ENCODE measurements at regions of chr10 and their contacts with region 1.

Region 1: DNA sequence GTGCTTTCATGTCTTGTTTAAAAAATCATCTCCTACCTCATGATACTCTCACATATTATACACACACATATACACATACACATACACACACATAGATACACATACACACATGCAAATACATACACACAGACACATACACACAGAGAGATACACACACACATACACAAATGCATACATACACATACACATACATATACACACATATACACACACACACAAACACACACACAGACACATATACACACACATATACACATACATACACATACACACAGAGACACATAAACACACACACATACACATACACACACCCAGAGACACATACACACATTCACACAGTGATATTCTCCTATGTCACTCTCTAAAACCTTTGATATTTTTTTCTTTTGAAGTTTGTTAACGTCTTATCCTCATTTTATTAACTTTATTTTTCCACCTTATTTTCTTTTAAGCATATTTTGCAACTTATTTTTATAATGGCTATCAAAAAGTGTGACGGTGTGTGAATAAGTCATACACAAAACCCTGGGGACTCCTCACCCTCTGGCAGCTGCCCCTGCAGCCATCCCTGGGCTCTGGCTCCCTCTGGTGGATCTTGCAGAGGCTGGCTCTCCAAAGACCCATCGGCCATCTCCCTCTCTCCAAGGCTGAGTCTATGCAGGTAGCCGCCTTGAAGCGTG is 3.9 kb upstream of the C10orf120 start:
- DNase-seq: peak; percentile 46 to 86
- H3K4me3 ChIP-seq: no peak overlapping the region
- H3K27ac ChIP-seq: no peak overlapping the region
- H3K4me1 ChIP-seq: no peaks in the 10 kb centered on the region; a peak in 1 of 7 replicates
- H3K27me3 ChIP-seq: no peaks in the 10 kb centered on the region
- CTCF ChIP-seq: peak; percentile 92 to 97 (median 95)
- EP300 ChIP-seq: no peak
- POLR2A ChIP-seq: no peak
- RAD21 ChIP-seq: peak; percentile 99

Region 2: DNA sequence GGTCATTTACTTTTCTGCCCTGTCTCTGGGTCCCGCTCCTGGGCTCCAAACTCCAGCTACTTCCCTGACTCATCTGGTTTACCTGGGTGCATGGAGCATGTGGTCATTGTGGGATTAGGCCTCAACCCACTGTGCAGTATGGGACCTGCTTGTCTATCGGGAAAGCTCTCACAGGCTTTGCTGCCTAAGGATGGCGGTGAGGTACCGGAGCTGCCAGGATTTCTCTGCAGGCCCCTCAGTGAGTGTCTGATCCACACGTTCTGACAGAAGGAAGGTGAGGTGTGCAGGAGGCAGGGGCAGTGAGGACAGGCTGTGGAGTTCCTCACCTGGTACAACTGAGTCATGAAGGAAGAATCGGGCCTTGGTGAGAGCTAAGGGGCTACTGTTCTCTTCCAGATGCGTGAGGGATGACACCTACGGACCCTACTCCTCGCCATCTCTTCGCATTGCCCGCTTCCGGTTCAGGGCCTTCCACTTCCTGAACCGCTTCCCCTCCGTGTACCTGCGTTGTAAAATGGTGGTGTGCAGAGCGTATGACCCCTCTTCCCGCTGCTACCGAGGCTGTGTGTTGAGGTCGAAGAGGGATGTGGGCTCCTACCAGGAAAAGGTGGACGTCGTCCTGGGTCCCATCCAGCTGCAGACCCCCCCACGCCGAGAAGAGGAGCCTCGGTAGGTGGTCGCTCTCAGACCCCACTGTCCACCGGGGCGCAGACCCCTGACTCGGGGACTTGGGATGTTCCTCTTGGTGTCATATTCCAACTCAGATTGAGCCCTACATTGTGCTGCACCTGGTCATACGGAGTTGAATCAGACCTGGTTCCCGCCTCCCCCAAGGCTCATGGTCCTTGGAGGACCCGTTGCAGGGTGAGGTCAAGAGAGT is 60.6 kb before region 1 on chr10:
- CTCF ChIA-PET with region 1: interaction called, 56 read pairs
- POLR2A ChIA-PET with region 1: no interaction called
- DNase-seq: no peak
- H3K4me3 ChIP-seq: no peak overlapping the region
- H3K27ac ChIP-seq: no peak overlapping the region
- H3K4me1 ChIP-seq: no peaks in the 10 kb centered on the region
- H3K27me3 ChIP-seq: no peaks in the 10 kb centered on the region
- CTCF ChIP-seq: no peak
- EP300 ChIP-seq: no peak
- POLR2A ChIP-seq: no peak
- RAD21 ChIP-seq: no peak

Measured in H1 (cell line).